Caco-2 (cell line): ENCODE measurements at regions of chr5 and their contacts with region 1.

Region 1: DNA sequence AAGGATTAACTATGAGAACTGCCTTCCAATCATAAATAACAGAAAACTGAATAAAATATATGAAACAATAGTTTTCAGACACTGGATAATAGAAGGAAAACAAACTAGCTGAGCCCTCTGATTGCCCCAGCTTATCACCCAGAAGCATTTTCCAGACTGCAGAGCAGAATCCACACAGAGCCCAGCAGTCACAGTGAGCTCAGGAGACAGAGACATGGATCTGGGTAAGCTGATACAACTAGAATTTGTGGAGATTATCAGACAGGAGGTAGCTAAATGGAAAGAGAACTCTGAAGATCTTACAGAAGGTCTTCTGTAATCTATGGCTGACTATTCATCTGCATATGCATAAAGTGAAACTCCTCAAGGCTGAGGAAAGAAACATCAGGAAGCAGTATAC is 128.8 kb downstream of the NR2F1-AS1 start:
- DNase-seq: no peak
- H3K4me3 ChIP-seq: no peak overlapping the region
- H3K4me3 Mint-ChIP-seq: no peak overlapping the region
- H3K27ac Mint-ChIP-seq: no peak overlapping the region
- H3K4me1 ChIP-seq: no peaks in the 10 kb centered on the region
- H3K4me1 Mint-ChIP-seq: no peaks in the 10 kb centered on the region
- H3K27me3 ChIP-seq: no peaks in the 10 kb centered on the region
- H3K27me3 Mint-ChIP-seq: no peaks in the 10 kb centered on the region
- CTCF ChIP-seq: no peak

Region 2: GRCh38 chr5:93359959-93360305 is 92.3 kb before region 1 on chr5:
- CTCF ChIA-PET with region 1: no interaction called
- POLR2A ChIA-PET with region 1: no interaction called
- intact Hi-C with region 1: loop called (anchors 1 kb)
- DNase-seq: no peak
- H3K4me3 ChIP-seq: no peak overlapping the region
- H3K4me3 Mint-ChIP-seq: no peak overlapping the region
- H3K27ac Mint-ChIP-seq: no peak overlapping the region
- H3K4me1 ChIP-seq: no peaks in the 10 kb centered on the region
- H3K4me1 Mint-ChIP-seq: no peaks in the 10 kb centered on the region
- H3K27me3 ChIP-seq: no peaks in the 10 kb centered on the region
- H3K27me3 Mint-ChIP-seq: peaks cover 7% of the 10 kb centered on the region
- CTCF ChIP-seq: no peak